Right ventricle myocardium inferior (tissue), 1 donor: ENCODE measurements at regions of chr14 and their contacts with region 1.

Region 1: DNA sequence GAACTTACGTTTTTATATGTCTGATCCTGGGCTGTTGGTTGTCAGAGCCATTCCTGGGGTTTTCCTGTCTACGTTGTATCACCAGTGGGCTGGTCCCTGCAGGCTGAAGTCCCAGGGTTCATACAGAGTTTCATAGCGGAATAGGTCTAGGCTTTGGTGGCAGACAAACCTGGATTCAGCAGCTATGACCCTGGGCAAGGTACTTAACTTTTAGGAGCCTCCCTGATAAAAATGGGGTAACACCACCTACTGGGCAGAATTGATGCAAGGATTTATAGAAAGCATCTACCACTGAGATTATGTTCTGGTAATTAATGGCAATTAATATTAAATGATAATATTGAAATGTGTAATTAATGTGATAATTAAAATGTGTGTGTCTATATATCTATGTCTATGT is 141.2 kb downstream of the SYNE2 start:
- DNase-seq: no peak
- ATAC-seq: no peak

Region 2: GRCh38 chr14:63795532-63795931 is 198.5 kb before region 1 on chr14:
- intact Hi-C with region 1: loop called (anchors 5 kb)
- DNase-seq: no peak
- ATAC-seq: no peak

Region 3: DNA sequence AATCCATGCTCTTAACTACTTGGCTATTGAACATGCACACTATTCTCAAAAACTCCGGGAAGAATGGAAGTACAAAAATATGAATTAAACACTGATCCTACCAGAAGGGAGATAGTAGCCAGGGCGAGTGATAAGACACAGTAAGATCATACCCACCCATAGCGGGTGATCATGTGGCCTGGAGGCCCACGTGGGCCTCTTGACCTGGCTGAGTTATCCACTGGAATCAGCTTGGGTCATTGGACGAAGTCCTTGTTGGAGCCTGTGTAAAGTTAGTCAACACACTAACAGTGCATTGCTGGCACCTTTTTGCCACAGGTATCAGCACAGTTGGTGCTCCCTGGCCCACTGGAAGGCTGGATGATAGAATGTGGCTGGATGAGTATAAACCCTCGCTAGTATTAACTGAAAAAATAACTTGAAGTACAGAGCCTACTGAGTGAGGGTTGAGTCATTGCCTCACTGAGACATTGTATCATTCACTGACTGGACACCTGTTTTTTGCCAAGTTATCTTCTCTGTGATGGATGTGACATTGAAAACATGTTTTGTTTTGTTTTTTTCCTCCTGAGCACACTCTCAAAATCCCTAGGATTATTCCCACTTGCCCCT is 1269.3 kb after region 1 on chr14:
- intact Hi-C with region 1: no loop called
- DNase-seq: no peak
- ATAC-seq: no peak